Natural killer cell (primary cell): ENCODE measurements at regions of chr17 and their contacts with region 1.

Region 1: GRCh38 chr17:64968652-64969501 is 49.6 kb upstream of the LRRC37A3 start:
- DNase-seq: peak in 1 of 2 donors; percentile 63
- ATAC-seq: peak; percentile 13 to 29 (median 25)
- H3K4me3 ChIP-seq: no peak overlapping the region
- H3K4me3 Mint-ChIP-seq: peak overlapping the region; percentile 90
- H3K27ac ChIP-seq: peak overlapping the region; percentile 97
- H3K27ac Mint-ChIP-seq: peak overlapping the region; percentile 97 to 99
- H3K4me1 ChIP-seq: peaks cover 45% of the 10 kb centered on the region
- H3K4me1 Mint-ChIP-seq: peaks cover 48 to 53% of the 10 kb centered on the region in 2 donors
- H3K27me3 ChIP-seq: no peaks in the 10 kb centered on the region
- H3K27me3 Mint-ChIP-seq: no peaks in the 10 kb centered on the region
- CTCF ChIP-seq: no peak

Region 2: DNA sequence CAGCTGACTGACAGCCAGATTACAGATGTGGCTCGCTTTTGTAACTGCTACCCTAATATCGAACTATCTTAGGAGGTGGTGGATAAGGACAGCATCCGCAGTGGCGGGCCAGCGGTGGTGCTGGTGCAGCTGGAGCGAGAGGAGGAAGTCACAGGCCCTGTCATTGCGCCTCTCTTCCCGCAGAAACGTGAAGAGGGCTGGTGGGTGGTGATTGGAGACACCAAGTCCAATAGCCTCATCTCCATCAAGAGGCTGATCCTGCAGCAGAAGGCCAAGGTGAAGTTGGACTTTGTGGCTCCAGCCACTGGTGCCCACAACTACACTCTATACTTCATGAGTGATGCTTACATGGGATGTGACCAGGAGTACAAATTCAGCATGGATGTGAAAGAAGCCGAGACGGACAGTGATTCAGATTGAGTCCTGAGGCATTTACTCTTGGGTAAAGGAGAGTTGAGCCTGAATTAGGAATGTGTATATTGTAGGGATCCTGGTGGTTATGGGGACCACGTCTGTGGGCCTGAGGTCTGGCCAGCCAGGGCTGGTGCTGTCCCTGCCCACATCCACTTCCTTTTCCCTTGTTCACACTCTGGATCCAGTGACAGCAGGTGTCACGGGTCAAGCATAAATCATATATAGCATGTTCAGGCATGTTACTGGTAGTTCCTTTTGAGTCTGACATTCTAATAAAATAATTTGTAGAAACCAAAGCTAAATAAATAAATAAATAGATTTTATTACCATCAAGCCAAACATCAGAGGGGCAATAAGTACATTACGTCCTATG is 217.8 kb before region 1 on chr17:
- intact Hi-C with region 1: no loop called
- DNase-seq: no peak
- ATAC-seq: no peak
- H3K4me3 ChIP-seq: no peak overlapping the region
- H3K4me3 Mint-ChIP-seq: no peak overlapping the region
- H3K27ac ChIP-seq: no peak overlapping the region
- H3K27ac Mint-ChIP-seq: no peak overlapping the region
- H3K4me1 ChIP-seq: no peaks in the 10 kb centered on the region
- H3K4me1 Mint-ChIP-seq: no peaks in the 10 kb centered on the region
- H3K27me3 ChIP-seq: no peaks in the 10 kb centered on the region
- H3K27me3 Mint-ChIP-seq: no peaks in the 10 kb centered on the region
- CTCF ChIP-seq: no peak

Region 3: DNA sequence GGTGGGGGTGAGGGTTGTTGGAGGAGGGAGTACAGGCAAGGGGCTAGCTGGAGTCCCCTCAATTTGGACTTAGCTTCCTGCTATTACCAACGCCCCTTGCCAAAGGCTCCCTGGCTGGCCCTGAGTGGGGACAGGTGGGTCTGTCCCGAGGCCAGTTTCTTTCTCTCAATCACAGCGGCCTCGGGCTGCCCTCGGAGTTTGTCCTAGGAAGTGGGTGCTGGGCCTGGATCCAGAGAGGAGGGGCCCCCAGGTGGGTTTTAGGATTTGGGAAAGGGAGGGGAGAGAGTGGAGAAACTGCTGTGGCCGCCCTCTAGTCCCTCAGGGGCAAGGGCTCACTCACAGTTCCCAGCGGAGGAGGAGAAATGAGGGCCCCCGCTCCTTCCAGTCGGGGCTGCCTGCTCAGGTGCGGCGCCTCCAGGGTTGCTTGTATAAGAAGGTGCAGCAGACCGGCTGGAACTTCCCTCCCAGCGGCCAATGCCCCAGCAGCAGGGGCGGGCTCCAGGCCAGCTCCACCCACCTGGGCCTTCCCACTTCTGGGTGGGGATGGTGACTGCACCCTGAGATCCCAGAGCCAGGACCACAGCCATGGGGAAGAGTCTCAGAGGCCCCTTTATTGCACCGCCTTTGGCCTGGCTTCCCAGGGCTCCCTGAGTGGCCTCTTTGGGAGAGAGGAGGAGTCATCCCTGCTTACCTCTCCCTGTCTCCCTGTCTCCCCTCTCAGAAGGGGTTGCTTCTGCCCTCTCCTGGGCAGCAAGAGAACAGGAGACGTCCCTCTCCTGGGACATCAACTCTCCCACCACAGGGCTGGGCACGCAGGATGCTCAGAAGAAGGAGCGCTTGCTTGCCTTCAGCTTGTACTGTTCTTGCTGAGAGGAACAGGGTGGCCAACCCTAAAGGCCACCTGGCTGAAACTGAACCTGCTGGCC is 194.8 kb before region 1 on chr17:
- intact Hi-C with region 1: loop called (anchors 5 kb)
- DNase-seq: no peak
- ATAC-seq: no peak
- H3K4me3 ChIP-seq: no peak overlapping the region
- H3K4me3 Mint-ChIP-seq: no peak overlapping the region
- H3K27ac ChIP-seq: no peak overlapping the region
- H3K27ac Mint-ChIP-seq: no peak overlapping the region
- H3K4me1 ChIP-seq: peaks cover 26% of the 10 kb centered on the region
- H3K4me1 Mint-ChIP-seq: peaks cover 10 to 19% of the 10 kb centered on the region in 2 donors
- H3K27me3 ChIP-seq: no peaks in the 10 kb centered on the region
- H3K27me3 Mint-ChIP-seq: no peaks in the 10 kb centered on the region
- CTCF ChIP-seq: no peak

Region 4: GRCh38 chr17:64920026-64920418 is 48.9 kb before region 1 on chr17:
- intact Hi-C with region 1: loop called (anchors 5 kb)
- DNase-seq: no peak
- ATAC-seq: no peak
- H3K4me3 ChIP-seq: peak overlapping the region; percentile 76
- H3K4me3 Mint-ChIP-seq: peak overlapping the region; percentile 88
- H3K27ac ChIP-seq: peak overlapping the region; percentile 86
- H3K27ac Mint-ChIP-seq: peak overlapping the region; percentile 85 to 90
- H3K4me1 ChIP-seq: peaks cover 9% of the 10 kb centered on the region
- H3K4me1 Mint-ChIP-seq: no peaks in the 10 kb centered on the region
- H3K27me3 ChIP-seq: no peaks in the 10 kb centered on the region
- H3K27me3 Mint-ChIP-seq: no peaks in the 10 kb centered on the region
- CTCF ChIP-seq: no peak

Region 5: DNA sequence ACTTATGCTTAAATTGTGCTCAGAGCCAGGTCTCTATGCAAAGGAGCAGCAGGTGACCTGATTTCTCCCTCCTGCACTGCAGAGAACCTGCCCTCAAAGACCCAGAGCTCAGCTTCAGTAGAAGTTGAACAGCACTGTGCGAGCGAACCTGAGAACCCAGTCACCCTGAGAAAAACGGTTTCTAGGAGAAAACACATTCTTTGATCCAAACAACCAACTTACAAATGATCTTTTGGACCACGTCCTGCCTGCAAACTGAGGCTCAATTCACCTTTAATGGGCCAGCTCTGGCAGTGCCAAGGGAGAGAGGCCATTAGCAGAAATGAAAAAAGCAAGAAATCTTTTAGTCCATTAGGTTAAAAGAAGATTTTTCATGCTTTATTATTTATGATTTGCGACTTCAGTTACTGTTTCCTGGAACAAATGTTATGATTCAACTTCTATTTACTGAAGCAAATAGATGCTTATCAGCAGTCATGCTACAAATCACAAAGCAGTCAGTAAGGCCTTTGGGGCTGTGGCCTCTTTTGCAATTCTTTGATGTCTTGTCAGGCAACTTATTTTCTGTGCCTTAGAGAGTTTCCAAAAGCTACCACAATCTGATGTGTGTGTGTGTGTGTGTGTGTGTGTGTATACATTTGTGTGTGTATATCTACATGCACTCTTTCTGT is 16.1 kb after region 1 on chr17:
- intact Hi-C with region 1: loop called (anchors 1 kb)
- DNase-seq: peak; percentile 20 to 85
- ATAC-seq: peak in 1 of 3 donors; percentile 6
- H3K4me3 ChIP-seq: no peak overlapping the region
- H3K4me3 Mint-ChIP-seq: peak overlapping the region; percentile 82
- H3K27ac ChIP-seq: peak overlapping the region; percentile 94
- H3K27ac Mint-ChIP-seq: peak overlapping the region; percentile 99 to 100
- H3K4me1 ChIP-seq: peaks cover 42% of the 10 kb centered on the region
- H3K4me1 Mint-ChIP-seq: peaks cover 37 to 44% of the 10 kb centered on the region in 2 donors
- H3K27me3 ChIP-seq: no peaks in the 10 kb centered on the region
- H3K27me3 Mint-ChIP-seq: no peaks in the 10 kb centered on the region
- CTCF ChIP-seq: no peak

Region 6: DNA sequence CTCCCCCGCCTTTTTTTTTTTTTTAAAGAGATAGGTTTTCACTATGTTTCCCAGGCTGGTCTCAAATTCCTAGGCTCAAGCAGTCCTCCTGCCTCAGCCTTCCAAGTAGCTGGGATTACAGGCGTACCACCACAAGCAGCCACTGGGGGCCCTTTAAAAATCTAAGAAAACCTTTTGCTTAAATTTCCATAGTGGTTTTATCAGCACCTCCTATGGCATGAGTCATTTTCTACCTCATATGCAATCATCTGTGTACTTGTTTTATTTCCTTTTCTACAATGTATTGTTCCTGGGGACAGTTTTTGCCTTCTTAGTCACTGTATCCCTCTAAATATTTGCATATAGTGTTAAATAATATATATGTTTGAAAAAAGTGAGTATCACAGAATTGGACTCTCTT is 58.4 kb after region 1 on chr17:
- intact Hi-C with region 1: loop called (anchors 2 kb)
- DNase-seq: peak; percentile 48 to 75
- ATAC-seq: peak; percentile 69 to 77 (median 69)
- H3K4me3 ChIP-seq: no peak overlapping the region
- H3K4me3 Mint-ChIP-seq: peak overlapping the region; percentile 59
- H3K27ac ChIP-seq: peak overlapping the region; percentile 60
- H3K27ac Mint-ChIP-seq: peak overlapping the region; percentile 68 to 86
- H3K4me1 ChIP-seq: peaks cover 36% of the 10 kb centered on the region
- H3K4me1 Mint-ChIP-seq: peaks cover 78 to 81% of the 10 kb centered on the region in 2 donors
- H3K27me3 ChIP-seq: no peaks in the 10 kb centered on the region
- H3K27me3 Mint-ChIP-seq: no peaks in the 10 kb centered on the region
- CTCF ChIP-seq: peak; percentile 64

Region 7: GRCh38 chr17:65100316-65101140 is 131.7 kb after region 1 on chr17:
- intact Hi-C with region 1: loop called (anchors 5 kb)
- DNase-seq: peak; percentile 86 to 92
- ATAC-seq: peak; percentile 81 to 94 (median 87)
- H3K4me3 ChIP-seq: peak overlapping the region; percentile 41
- H3K4me3 Mint-ChIP-seq: peak overlapping the region; percentile 87
- H3K27ac ChIP-seq: peak overlapping the region; percentile 60
- H3K27ac Mint-ChIP-seq: peak overlapping the region; percentile 93
- H3K4me1 ChIP-seq: peaks cover 15% of the 10 kb centered on the region
- H3K4me1 Mint-ChIP-seq: peaks cover 19 to 22% of the 10 kb centered on the region in 2 donors
- H3K27me3 ChIP-seq: no peaks in the 10 kb centered on the region
- H3K27me3 Mint-ChIP-seq: no peaks in the 10 kb centered on the region
- CTCF ChIP-seq: peak; percentile 64